ENCODE measurements at regions of chr18 and their contacts with region 1.

Region 1: GRCh38 chr18:77124452-77124922 is 8.1 kb downstream of the MBP start:
- DNase-seq: no peak
- H3K4me3 ChIP-seq: no peak overlapping the region
- H3K27ac ChIP-seq: no peak overlapping the region
- H3K4me1 ChIP-seq: peaks cover 0 to 11% (median 4%) of the 10 kb centered on the region in 4 experiments; a peak in 5 of 7 replicates
- H3K27me3 ChIP-seq: no peaks in the 10 kb centered on the region
- CTCF ChIP-seq: no peak
- EP300 ChIP-seq: no peak
- POLR2A ChIP-seq: no peak
- RAD21 ChIP-seq: no peak

Region 2: DNA sequence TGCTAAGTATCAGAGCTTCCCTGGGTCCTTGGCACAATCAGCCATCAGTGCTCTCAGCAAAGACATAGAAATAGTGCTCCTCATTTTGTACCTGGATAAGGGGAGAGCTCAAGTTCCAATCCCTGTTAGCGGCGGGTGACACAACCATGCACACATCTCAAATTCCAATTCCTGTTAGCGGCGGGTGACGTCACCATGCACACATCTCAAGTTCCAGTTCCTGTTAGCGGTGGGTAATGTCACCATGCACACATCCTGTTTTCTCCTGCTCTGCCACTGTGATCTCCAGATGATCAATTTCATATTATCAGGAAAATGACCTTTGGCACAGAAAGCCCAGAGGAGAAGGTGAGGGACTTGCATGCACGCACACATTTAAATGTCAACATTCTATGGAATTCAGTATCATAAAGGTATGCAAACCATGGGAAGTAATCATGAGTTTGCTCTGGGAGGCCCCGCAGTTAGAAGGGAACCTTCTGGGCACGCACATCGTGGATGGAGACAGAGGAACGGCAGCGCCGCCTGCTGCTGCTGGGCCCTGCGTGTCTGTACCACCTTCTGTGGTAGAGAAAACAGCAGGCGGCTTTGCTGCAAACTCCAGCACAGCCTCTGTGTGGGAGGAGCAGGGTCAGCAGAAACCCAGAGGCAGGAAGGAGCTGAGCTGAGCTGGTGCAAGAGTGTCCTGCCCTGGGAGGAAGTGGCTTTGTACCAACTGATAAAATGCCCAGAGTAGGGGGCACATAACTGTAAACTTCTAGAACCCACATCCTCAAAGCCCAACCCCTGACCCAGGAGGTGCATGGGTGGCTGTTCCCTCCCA is 69.7 kb before region 1 on chr18:
- CTCF ChIA-PET with region 1: no interaction called
- POLR2A ChIA-PET with region 1: no interaction called
- DNase-seq: peak in 1 of 2 experiments; percentile 33
- H3K4me3 ChIP-seq: no peak overlapping the region
- H3K27ac ChIP-seq: no peak overlapping the region
- H3K4me1 ChIP-seq: peaks cover 15 to 32% (median 21%) of the 10 kb centered on the region in 4 experiments
- H3K27me3 ChIP-seq: no peaks in the 10 kb centered on the region
- CTCF ChIP-seq: peak; percentile 52 to 60 (median 59)
- EP300 ChIP-seq: no peak
- POLR2A ChIP-seq: no peak
- RAD21 ChIP-seq: peak; percentile 60 to 61

Region 3: DNA sequence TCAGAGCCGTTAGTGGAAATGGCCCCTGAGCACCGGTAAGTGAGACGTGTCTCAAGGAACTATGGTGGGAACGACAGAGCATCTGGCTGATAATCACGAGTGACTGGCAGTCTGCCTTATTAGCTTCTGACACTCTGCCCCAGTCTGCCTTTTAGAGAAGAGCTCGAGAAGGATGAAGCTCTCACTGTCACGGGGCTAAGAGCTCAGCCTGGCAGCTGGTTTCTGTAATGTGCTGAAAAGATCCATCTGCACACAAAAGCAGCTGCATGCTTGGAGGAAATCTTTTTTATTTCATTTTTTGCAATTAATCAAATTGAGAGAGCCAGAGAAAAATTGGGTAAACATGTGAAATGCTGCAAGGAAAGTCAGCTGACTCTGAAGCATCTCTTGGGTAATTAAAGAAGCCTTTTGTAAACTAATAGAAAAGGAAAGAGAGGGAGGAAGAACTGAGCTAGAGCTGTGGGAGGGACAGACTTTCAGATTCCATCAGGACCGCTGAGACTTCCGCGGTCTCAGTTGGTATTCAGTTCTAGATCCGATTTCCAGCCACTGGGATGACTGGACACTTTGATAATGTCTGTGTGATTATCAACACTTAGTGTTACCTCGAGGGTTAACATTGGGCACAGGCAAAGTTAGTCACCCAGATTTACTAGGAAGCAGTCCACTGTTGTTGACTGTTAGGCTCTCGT is 16.3 kb before region 1 on chr18:
- CTCF ChIA-PET with region 1: interaction called, 17 read pairs
- POLR2A ChIA-PET with region 1: interaction called, 3 read pairs
- DNase-seq: peak in 1 of 2 experiments; percentile 33
- H3K4me3 ChIP-seq: no peak overlapping the region
- H3K27ac ChIP-seq: no peak overlapping the region
- H3K4me1 ChIP-seq: peaks cover 0 to 9% (median 0%) of the 10 kb centered on the region in 4 experiments; a peak in 2 of 7 replicates
- H3K27me3 ChIP-seq: no peaks in the 10 kb centered on the region
- CTCF ChIP-seq: no peak
- EP300 ChIP-seq: no peak
- POLR2A ChIP-seq: no peak
- RAD21 ChIP-seq: no peak

Region 4: DNA sequence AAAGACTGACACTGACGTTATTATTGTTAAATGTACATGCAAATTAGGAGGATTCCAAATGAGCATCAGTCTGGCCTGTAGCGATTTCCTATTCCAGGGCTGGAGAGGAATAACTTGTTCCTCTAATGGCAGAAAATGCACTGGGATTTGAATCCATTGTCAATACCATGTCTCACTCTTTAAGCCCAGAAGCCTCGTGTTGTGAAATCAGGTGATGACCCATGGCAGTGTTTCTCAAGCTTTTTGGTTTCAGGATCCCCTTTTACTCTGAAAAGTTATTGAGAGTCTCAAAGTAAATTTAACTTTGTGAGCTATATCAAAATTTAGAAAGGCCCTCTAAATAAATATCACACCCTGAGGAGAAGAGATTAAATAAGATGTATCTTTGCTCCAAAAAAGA is 404.4 kb after region 1 on chr18:
- CTCF ChIA-PET with region 1: no interaction called
- POLR2A ChIA-PET with region 1: no interaction called
- DNase-seq: no peak
- H3K4me3 ChIP-seq: no peak overlapping the region
- H3K27ac ChIP-seq: no peak overlapping the region
- H3K4me1 ChIP-seq: peaks cover 0 to 5% (median 0%) of the 10 kb centered on the region in 4 experiments; a peak in 1 of 7 replicates
- H3K27me3 ChIP-seq: no peaks in the 10 kb centered on the region
- CTCF ChIP-seq: no peak
- EP300 ChIP-seq: no peak
- POLR2A ChIP-seq: no peak
- RAD21 ChIP-seq: no peak